CD14-positive monocyte (primary cell): ENCODE measurements at regions of chr2 and their contacts with region 1.

Region 1: DNA sequence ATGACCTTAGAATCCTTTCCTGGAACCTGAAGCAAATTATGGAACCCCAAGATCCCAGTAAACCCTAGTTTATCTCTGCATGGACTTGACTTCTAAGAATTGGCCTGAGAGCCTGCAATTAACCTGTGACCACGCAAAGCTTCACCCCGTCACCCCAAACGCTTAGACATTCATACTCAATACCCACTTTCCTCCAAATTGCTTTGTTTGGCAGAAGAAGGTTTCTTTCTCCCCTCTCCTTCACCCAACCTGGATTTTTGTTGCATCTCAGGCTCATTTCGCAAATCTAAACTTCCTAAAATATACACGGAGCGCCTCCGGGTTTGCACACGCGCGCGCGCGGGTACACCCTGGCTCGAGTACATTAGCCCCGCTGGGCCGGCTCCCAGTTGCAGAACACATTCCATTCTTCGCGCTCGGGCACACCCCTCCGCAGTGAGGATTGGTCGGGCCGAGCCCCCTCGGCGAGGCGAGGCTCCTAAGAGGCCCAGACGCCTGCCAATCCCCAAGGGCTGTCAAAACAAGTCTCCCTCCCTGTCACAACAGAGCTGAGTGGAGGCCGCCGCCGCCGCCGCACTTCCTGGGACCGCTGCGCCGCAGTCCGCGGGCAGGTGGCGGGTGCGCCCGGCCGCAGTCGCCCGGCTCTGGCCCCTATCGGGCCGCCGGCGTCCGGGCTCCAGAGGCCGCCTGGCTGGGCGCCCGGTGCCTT is at the start of gene PLCL1:
- DNase-seq: peak; percentile 67 to 85 (median 80)
- H3K4me3 ChIP-seq: peak within 1 kb of the TSS; percentile 56 to 81 (median 65)
- H3K4me3 Mint-ChIP-seq: peak within 1 kb of the TSS; percentile 93 to 97
- H3K27ac ChIP-seq: no peak within 1 kb of the TSS
- H3K27ac Mint-ChIP-seq: peak within 1 kb of the TSS in 3 of 7 donors; percentile 61 to 76 (median 63)
- H3K4me1 ChIP-seq: peaks cover 22 to 33% of the 10 kb centered on the region in 2 donors
- H3K4me1 Mint-ChIP-seq: peaks cover 27% of the 10 kb centered on the region
- H3K27me3 ChIP-seq: peaks cover 0 to 13% of the 10 kb centered on the region in 2 donors
- H3K27me3 Mint-ChIP-seq: peaks cover 10 to 16% (median 14%) of the 10 kb centered on the region in 3 donors
- CTCF ChIP-seq: no peak
- polyA plus RNA-seq, gene PLCL1: 0.69 to 1.4 (median 0.79) TPM

Region 2: GRCh38 chr2:197710424-197711042 is 93.7 kb before region 1 on chr2:
- intact Hi-C with region 1: no loop called
- DNase-seq: peak in 1 of 3 donors; percentile 7
- H3K4me3 ChIP-seq: no peak overlapping the region
- H3K4me3 Mint-ChIP-seq: no peak overlapping the region
- H3K27ac ChIP-seq: no peak overlapping the region
- H3K27ac Mint-ChIP-seq: no peak overlapping the region
- H3K4me1 ChIP-seq: peaks cover 19 to 23% of the 10 kb centered on the region in 2 donors
- H3K4me1 Mint-ChIP-seq: peaks cover 44% of the 10 kb centered on the region
- H3K27me3 ChIP-seq: no peaks in the 10 kb centered on the region
- H3K27me3 Mint-ChIP-seq: peaks cover 0 to 2% (median 0%) of the 10 kb centered on the region in 3 donors
- CTCF ChIP-seq: no peak

Region 3: DNA sequence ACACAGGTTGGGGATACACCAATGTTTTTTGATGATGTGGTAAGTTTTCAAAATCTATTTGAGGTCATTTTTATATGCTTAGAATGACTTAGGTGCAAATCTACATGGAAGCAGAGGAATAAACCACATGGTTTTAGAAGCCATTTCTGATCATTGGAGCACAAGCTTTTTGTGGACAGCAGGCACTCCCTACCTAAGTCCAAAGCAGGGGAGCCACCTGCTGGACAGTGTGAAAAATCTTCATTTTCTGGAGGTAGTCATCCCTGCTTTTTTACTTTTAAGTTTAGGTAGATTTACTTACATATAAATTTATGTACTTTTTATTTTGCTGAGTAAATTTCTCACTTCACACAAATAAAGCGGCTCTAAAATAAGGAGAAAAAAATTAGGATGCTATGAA is 323.4 kb after region 1 on chr2:
- intact Hi-C with region 1: loop called (anchors 5 kb)
- DNase-seq: peak; percentile 28 to 55 (median 48)
- H3K4me3 ChIP-seq: no peak overlapping the region
- H3K4me3 Mint-ChIP-seq: no peak overlapping the region
- H3K27ac ChIP-seq: no peak overlapping the region
- H3K27ac Mint-ChIP-seq: no peak overlapping the region
- H3K4me1 ChIP-seq: no peaks in the 10 kb centered on the region
- H3K4me1 Mint-ChIP-seq: no peaks in the 10 kb centered on the region
- H3K27me3 ChIP-seq: no peaks in the 10 kb centered on the region
- H3K27me3 Mint-ChIP-seq: peaks cover 1 to 6% (median 4%) of the 10 kb centered on the region in 3 donors
- CTCF ChIP-seq: peak; percentile 77

Region 4: GRCh38 chr2:198296665-198297308 is 492.6 kb after region 1 on chr2:
- intact Hi-C with region 1: loop called (anchors 5 to 10 kb)
- DNase-seq: peak; percentile 24 to 46 (median 42)
- H3K4me3 ChIP-seq: no peak overlapping the region
- H3K4me3 Mint-ChIP-seq: no peak overlapping the region
- H3K27ac ChIP-seq: no peak overlapping the region
- H3K27ac Mint-ChIP-seq: no peak overlapping the region
- H3K4me1 ChIP-seq: no peaks in the 10 kb centered on the region
- H3K4me1 Mint-ChIP-seq: peaks cover 6% of the 10 kb centered on the region
- H3K27me3 ChIP-seq: no peaks in the 10 kb centered on the region
- H3K27me3 Mint-ChIP-seq: peaks cover 4 to 13% (median 9%) of the 10 kb centered on the region in 3 donors
- CTCF ChIP-seq: peak; percentile 86